MCF 10A (cell line): ENCODE measurements at regions of chr5 and their contacts with region 1.

Region 1: DNA sequence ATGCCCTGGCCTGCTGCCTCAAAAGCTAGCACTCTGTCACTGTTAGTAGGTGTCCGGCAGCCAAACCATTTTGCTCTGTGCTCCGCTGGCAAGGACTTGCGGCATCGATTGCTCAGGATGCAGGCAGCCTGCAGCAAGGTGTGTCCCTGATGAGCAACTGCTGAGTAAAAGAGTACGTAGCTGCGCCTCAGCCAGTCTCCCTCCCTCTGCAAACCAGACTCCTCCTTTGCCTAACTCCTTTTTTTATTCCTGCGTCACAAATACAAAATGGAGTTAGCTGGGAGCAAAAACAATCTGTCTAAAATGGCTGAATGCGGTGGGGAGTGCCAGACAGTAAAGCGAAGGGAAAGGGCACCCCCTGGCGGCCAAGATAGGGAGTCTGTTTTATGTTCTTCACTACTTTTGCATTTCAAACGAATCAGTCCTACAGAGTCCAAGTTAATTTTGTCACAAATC is 61.1 kb downstream of the DIAPH1 start:
- DNase-seq: peak; percentile 99
- H3K4me3 Mint-ChIP-seq: peak overlapping the region; percentile 70
- H3K27ac Mint-ChIP-seq: peak overlapping the region; percentile 98
- H3K4me1 Mint-ChIP-seq: peaks cover 49% of the 10 kb centered on the region
- H3K27me3 Mint-ChIP-seq: no peaks in the 10 kb centered on the region
- CTCF ChIP-seq: peak; percentile 93

Region 2: GRCh38 chr5:141084487-141084990 is 473.2 kb before region 1 on chr5:
- CTCF ChIA-PET with region 1: interaction called, 9 read pairs
- POLR2A ChIA-PET with region 1: interaction called, 4 read pairs
- intact Hi-C with region 1: loop called (anchors 2 kb)
- DNase-seq: peak; percentile 49
- H3K4me3 Mint-ChIP-seq: peak overlapping the region; percentile 87
- H3K27ac Mint-ChIP-seq: peak overlapping the region; percentile 84
- H3K4me1 Mint-ChIP-seq: peaks cover 7% of the 10 kb centered on the region
- H3K27me3 Mint-ChIP-seq: no peaks in the 10 kb centered on the region
- CTCF ChIP-seq: peak; percentile 59

Region 3: GRCh38 chr5:141208478-141208877 is 349.2 kb before region 1 on chr5 and contains the start of gene PCDHB12:
- CTCF ChIA-PET with region 1: interaction called, 18 read pairs
- POLR2A ChIA-PET with region 1: interaction called, 4 read pairs
- intact Hi-C with region 1: loop called (anchors 1 kb)
- DNase-seq: peak; percentile 60
- H3K4me3 Mint-ChIP-seq: peak within 1 kb of the TSS; percentile 72
- H3K27ac Mint-ChIP-seq: no peak within 1 kb of the TSS
- H3K4me1 Mint-ChIP-seq: no peaks in the 10 kb centered on the region
- H3K27me3 Mint-ChIP-seq: no peaks in the 10 kb centered on the region
- CTCF ChIP-seq: peak; percentile 38
- total RNA-seq, gene PCDHB12: 1.6 and 2.3 TPM in 2 replicates

Region 4: GRCh38 chr5:141369994-141370848 is 187.5 kb before region 1 on chr5 and contains the start of gene PCDHGB3:
- CTCF ChIA-PET with region 1: interaction called, 12 read pairs
- POLR2A ChIA-PET with region 1: no interaction called
- intact Hi-C with region 1: loop called (anchors 2 kb)
- DNase-seq: peak; percentile 33
- H3K4me3 Mint-ChIP-seq: peak within 1 kb of the TSS; percentile 60
- H3K27ac Mint-ChIP-seq: no peak within 1 kb of the TSS
- H3K4me1 Mint-ChIP-seq: no peaks in the 10 kb centered on the region
- H3K27me3 Mint-ChIP-seq: no peaks in the 10 kb centered on the region
- CTCF ChIP-seq: peak; percentile 24
- total RNA-seq, gene PCDHGB3: 0.33 and 0.56 TPM in 2 replicates

Region 5: DNA sequence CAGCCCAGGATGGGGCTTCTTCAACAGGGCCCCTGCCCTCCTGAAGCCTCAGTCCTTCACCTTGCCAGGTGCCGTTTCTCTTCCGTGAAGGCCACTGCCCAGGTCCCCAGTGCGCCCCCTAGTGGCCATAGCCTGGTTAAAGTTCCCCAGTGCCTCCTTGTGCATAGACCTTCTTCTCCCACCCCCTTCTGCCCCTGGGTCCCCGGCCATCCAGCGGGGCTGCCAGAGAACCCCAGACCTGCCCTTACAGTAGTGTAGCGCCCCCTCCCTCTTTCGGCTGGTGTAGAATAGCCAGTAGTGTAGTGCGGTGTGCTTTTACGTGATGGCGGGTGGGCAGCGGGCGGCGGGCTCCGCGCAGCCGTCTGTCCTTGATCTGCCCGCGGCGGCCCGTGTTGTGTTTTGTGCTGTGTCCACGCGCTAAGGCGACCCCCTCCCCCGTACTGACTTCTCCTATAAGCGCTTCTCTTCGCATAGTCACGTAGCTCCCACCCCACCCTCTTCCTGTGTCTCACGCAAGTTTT is 45.3 kb before region 1 on chr5:
- CTCF ChIA-PET with region 1: interaction called, 26 read pairs
- POLR2A ChIA-PET with region 1: interaction called, 10 read pairs
- intact Hi-C with region 1: loop called (anchors 1 kb)
- DNase-seq: peak; percentile 81
- H3K4me3 Mint-ChIP-seq: no peak overlapping the region
- H3K27ac Mint-ChIP-seq: peak overlapping the region; percentile 81
- H3K4me1 Mint-ChIP-seq: peaks cover 58% of the 10 kb centered on the region
- H3K27me3 Mint-ChIP-seq: no peaks in the 10 kb centered on the region
- CTCF ChIP-seq: peak; percentile 98

Region 6: GRCh38 chr5:141618804-141619554 is 61.3 kb after region 1 on chr5 and contains the start of gene DIAPH1:
- CTCF ChIA-PET with region 1: interaction called, 3 read pairs
- POLR2A ChIA-PET with region 1: interaction called, 14 read pairs
- intact Hi-C with region 1: no loop called
- DNase-seq: peak; percentile 99
- H3K4me3 Mint-ChIP-seq: peak within 1 kb of the TSS; percentile 96
- H3K27ac Mint-ChIP-seq: peak within 1 kb of the TSS; percentile 99
- H3K4me1 Mint-ChIP-seq: peaks cover 21% of the 10 kb centered on the region
- H3K27me3 Mint-ChIP-seq: no peaks in the 10 kb centered on the region
- CTCF ChIP-seq: peak; percentile 99
- total RNA-seq, gene DIAPH1: 203 and 228 TPM in 2 replicates